ENCODE measurements at regions of chr7 and their contacts with region 1.

Region 1: DNA sequence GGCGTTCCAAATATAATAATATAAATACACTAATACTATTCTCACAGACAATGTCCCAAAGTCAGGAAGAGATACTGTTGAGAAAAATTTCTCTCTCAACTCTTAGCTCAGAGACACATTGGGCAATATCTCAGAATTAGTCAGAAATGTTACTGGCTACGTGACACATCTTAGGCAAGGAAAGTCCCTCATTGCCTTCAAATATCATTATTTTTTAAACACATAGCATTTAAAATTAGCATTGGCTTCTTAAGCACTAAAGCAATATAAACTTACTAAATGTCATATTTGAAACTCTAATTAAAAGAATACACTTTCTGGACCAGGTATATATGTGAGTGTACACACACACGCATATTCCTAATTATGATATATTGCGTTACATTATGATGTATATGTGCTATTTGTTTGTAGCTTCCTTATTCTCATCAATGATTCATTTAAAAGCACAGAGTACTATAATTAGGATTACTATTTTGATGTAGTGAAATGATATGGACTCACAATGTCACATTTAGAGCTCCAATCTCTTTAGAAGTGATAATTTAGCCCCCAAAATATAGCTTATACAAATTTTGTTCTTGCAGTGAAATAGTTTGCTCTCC is 255.8 kb downstream of the TWIST1 start:
- DNase-seq: no peak
- ATAC-seq: peak; percentile 60
- H3K4me3 Mint-ChIP-seq: no peak overlapping the region
- H3K27ac Mint-ChIP-seq: peak overlapping the region; percentile 15
- H3K4me1 Mint-ChIP-seq: peaks cover 4% of the 10 kb centered on the region
- H3K27me3 Mint-ChIP-seq: no peaks in the 10 kb centered on the region

Region 2: DNA sequence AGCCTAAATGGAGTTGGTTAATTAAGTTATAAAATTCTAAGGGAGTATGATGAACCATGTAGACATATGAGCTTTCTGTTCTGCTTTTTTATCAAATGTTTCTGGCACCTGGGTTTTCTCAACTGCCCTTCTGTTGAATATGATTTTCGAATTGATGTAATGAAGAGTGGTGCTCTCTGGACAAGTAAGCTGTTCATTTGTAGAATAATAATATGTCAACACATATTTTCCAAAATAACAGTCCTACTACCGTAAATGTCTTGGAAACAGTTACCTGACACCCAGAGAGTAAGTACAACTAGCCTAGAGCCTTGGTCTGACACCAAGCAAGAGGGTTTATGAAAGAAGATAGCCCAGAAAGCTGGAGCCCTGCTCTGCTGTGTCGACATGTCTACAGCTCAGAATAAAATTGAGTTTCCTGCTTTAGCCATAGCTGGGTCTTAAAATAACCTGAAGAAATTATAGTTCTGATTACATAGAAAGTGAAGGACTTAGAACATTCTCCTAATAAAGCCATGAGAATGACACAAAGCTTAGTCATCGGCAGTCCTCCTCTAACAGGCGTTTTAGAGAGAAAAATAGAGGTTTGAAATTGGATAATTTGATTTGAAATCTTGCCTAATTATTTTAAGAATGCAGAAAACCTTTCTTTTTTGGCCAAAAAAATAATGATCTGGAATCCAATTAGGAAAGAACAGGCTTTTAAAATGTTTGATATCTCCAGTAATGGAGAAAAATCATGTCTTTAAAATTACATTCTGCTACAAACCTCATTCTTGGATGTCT is 341.0 kb before region 1 on chr7:
- CTCF ChIA-PET with region 1: no interaction called
- POLR2A ChIA-PET with region 1: no interaction called
- intact Hi-C with region 1: loop called in 1 of 2 experiments (anchors 5 kb)
- DNase-seq: no peak
- ATAC-seq: no peak
- H3K4me3 Mint-ChIP-seq: no peak overlapping the region
- H3K27ac Mint-ChIP-seq: no peak overlapping the region
- H3K4me1 Mint-ChIP-seq: no peaks in the 10 kb centered on the region
- H3K27me3 Mint-ChIP-seq: no peaks in the 10 kb centered on the region

Region 3: DNA sequence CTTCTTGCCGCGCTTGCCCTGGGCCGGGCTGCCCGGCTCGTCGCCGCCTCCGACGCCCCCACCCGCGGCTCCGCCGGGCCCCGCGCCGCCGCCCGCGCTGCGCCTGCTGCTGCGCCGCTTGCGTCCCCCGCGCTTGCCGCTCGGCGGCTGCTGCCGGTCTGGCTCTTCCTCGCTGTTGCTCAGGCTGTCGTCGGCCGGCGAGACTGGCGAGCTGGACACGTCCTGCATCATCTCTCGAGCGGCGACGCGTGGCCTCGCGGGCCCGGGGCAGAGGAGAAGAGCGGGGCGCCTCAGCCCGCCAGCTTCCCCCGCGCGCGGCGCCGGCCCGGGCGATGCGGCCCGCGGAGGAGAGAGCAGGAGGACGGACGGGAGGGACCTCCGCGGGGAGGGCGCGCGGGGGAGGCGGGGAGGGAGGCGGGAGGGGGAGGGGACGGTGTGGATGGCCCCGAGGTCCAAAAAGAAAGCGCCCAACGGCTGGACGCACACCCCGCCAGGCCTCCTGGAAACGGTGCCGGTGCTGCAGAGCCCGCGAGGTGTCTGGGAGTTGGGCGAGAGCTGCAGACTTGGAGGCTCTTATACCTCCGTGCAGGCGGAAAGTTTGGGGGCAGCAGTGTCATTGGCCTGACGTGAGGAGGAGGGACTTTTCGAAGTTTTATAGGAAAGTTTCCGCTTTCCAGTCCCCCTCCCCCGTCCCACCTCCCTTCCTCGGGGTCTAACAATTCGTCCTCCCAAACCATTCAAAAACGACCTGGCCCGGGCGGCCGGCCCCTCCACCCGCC is 255.7 kb after region 1 on chr7 and contains the start of gene TWIST1:
- CTCF ChIA-PET with region 1: no interaction called
- POLR2A ChIA-PET with region 1: no interaction called
- intact Hi-C with region 1: no loop called
- DNase-seq: peak; percentile 24
- ATAC-seq: peak; percentile 36
- H3K4me3 Mint-ChIP-seq: no peak within 1 kb of the TSS
- H3K27ac Mint-ChIP-seq: no peak within 1 kb of the TSS
- H3K4me1 Mint-ChIP-seq: peaks cover 4% of the 10 kb centered on the region
- H3K27me3 Mint-ChIP-seq: peaks cover 48% of the 10 kb centered on the region
- total RNA-seq, gene TWIST1: 1.2 TPM

Region 4: DNA sequence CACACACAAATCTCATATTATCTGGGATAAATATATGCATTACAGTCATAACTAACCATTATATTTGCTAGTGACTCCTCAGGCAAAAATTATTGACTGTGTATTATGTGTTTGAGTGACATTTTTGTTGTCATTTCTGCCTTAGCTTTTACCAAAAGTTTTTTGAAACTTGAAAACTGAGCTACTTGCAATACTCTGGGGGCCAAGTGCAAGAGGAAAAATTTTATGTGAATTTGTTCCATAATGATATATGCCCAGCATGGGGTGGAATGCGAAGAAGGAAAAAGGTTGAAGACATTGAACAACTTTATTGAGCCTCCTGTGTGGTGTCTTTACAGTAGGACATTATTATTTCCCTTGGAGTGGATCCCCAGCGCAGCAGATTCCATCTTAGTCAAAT is 460.4 kb after region 1 on chr7:
- CTCF ChIA-PET with region 1: no interaction called
- POLR2A ChIA-PET with region 1: no interaction called
- intact Hi-C with region 1: no loop called
- DNase-seq: no peak
- ATAC-seq: no peak
- H3K4me3 Mint-ChIP-seq: no peak overlapping the region
- H3K27ac Mint-ChIP-seq: no peak overlapping the region
- H3K4me1 Mint-ChIP-seq: no peaks in the 10 kb centered on the region
- H3K27me3 Mint-ChIP-seq: no peaks in the 10 kb centered on the region